ENCODE measurements at regions of chr10 and their contacts with region 1.

Region 1: GRCh38 chr10:101840741-101841453 is 2.7 kb downstream of the KCNIP2 start:
- DNase-seq: peak; percentile 85
- H3K4me3 ChIP-seq: peak overlapping the region; percentile 17 to 45 (median 26)
- H3K27ac ChIP-seq: no peak overlapping the region
- H3K4me1 ChIP-seq: peaks cover 13% of the 10 kb centered on the region
- H3K27me3 ChIP-seq: no peaks in the 10 kb centered on the region
- CTCF ChIP-seq: peak; percentile 98 to 99
- POLR2A ChIP-seq: no peak

Region 2: GRCh38 chr10:101807158-101807557 is 33.7 kb before region 1 on chr10:
- CTCF ChIA-PET with region 1: no interaction called
- POLR2A ChIA-PET with region 1: no interaction called
- dilution Hi-C with region 1: no loop called
- intact Hi-C with region 1: no loop called
- DNase-seq: no peak
- H3K4me3 ChIP-seq: no peak overlapping the region
- H3K27ac ChIP-seq: no peak overlapping the region
- H3K4me1 ChIP-seq: no peaks in the 10 kb centered on the region
- H3K27me3 ChIP-seq: no peaks in the 10 kb centered on the region
- CTCF ChIP-seq: no peak
- POLR2A ChIP-seq: no peak

Region 3: DNA sequence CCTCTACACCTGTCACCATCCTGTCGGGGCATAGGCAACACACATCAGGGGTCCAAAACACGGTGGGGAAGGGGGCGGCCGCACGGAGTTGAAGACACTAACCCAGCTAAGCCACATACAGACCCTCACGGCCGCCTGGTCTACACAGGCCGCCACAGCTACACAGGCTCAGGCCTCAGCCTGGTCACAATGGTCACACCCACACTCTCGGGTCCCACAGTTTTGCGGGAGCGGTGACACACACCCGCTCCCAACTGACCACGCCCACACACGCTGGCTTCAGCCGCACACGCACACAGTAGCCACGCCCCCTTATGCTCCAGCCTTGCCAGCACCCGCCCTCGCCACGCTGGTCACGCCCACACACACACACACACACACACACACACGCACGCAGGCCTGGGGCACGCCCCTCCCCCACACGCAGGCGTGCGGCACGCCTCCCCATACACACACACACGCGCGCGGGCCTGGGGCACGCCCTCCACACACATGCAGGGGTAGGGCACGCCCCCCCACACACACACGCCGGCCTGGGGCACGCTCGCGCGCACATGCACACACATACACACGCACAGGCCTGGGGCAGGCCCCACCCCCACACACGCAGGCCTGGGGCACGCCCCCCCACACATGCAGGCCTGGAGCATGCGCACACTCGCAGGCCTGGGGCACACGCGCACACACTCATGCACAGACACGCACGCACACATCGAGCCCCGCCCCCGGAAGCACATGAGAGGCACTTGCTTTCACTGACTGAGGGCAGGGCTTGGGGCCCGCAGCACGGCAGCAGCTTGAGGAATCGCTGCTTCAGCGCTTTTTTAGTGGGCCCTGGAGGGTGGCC is 10.4 kb before region 1 on chr10:
- CTCF ChIA-PET with region 1: interaction called, 19 read pairs
- POLR2A ChIA-PET with region 1: no interaction called
- dilution Hi-C with region 1: no loop called
- intact Hi-C with region 1: loop called (anchors 1 kb)
- DNase-seq: peak; percentile 91
- H3K4me3 ChIP-seq: peak overlapping the region in 2 of 3 experiments; percentile 25 to 64
- H3K27ac ChIP-seq: no peak overlapping the region
- H3K4me1 ChIP-seq: peaks cover 11% of the 10 kb centered on the region
- H3K27me3 ChIP-seq: no peaks in the 10 kb centered on the region
- CTCF ChIP-seq: no peak
- POLR2A ChIP-seq: no peak

Region 4: GRCh38 chr10:101901340-101901739 is 60.4 kb after region 1 on chr10:
- CTCF ChIA-PET with region 1: interaction called, 19 read pairs
- POLR2A ChIA-PET with region 1: no interaction called
- dilution Hi-C with region 1: no loop called
- intact Hi-C with region 1: no loop called
- DNase-seq: no peak
- H3K4me3 ChIP-seq: no peak overlapping the region
- H3K27ac ChIP-seq: no peak overlapping the region
- H3K4me1 ChIP-seq: no peaks in the 10 kb centered on the region
- H3K27me3 ChIP-seq: no peaks in the 10 kb centered on the region
- CTCF ChIP-seq: no peak
- POLR2A ChIP-seq: no peak

Region 5: DNA sequence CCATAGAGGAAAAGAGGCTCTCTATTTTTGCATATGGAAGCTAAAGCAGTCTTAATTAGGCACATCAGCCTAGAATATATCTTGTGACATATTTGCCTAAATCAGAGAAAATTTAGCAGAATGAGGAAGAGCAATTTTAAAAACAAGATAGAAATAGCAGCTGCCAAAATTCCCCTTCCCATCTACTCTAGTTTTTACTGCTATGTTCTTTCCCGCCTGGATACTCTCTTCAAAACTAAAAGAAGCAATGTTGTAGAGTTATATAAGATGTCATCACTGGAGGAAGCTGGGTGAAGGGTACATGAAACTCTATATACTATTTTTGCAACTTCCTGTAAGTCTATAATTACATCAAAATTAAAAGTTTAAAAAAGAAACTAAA is 128.0 kb after region 1 on chr10:
- CTCF ChIA-PET with region 1: interaction called, 15 read pairs
- POLR2A ChIA-PET with region 1: no interaction called
- dilution Hi-C with region 1: no loop called
- intact Hi-C with region 1: no loop called
- DNase-seq: no peak
- H3K4me3 ChIP-seq: no peak overlapping the region
- H3K27ac ChIP-seq: no peak overlapping the region
- H3K4me1 ChIP-seq: peaks cover 8% of the 10 kb centered on the region
- H3K27me3 ChIP-seq: no peaks in the 10 kb centered on the region
- CTCF ChIP-seq: no peak
- POLR2A ChIP-seq: no peak

Region 6: DNA sequence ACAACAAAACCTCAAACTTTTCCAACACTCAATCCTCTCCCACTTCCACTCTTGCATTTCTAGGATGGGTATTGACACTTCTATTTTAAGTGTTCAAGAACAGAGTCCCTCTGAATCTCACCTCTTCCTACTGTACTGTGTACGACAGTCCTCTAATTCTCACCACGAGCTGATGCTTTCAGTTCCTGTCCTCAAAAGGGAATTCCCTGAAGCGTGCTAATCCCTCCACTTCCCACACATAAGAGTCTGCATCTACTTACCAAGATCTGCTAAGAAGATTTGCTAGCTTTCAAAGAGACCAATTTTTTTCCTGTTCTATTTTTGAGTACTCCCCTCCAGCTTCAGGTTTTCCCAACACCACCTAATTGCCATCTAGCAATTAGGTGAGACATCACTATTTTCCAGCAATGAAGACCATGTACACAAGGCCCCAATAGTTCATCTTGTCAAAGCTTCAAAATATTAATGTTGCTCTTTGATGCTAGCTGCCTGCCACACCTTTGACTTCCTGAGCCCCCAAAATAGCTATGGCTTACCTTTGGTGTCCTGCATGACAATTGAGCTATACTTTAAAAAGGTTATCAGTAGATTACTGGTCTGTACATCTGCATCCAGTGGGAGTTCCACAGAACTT is 160.7 kb after region 1 on chr10:
- CTCF ChIA-PET with region 1: interaction called, 742 read pairs
- POLR2A ChIA-PET with region 1: no interaction called
- dilution Hi-C with region 1: no loop called
- intact Hi-C with region 1: no loop called
- DNase-seq: no peak
- H3K4me3 ChIP-seq: no peak overlapping the region
- H3K27ac ChIP-seq: no peak overlapping the region
- H3K4me1 ChIP-seq: no peaks in the 10 kb centered on the region
- H3K27me3 ChIP-seq: no peaks in the 10 kb centered on the region
- CTCF ChIP-seq: no peak
- POLR2A ChIP-seq: no peak

Region 7: GRCh38 chr10:102064868-102065560 is 224.1 kb after region 1 on chr10 and contains the start of gene HPS6:
- CTCF ChIA-PET with region 1: interaction called, 45 read pairs
- POLR2A ChIA-PET with region 1: no interaction called
- dilution Hi-C with region 1: no loop called
- intact Hi-C with region 1: loop called (anchors 2 kb)
- DNase-seq: peak; percentile 90
- H3K4me3 ChIP-seq: peak within 1 kb of the TSS; percentile 42 to 89 (median 62)
- H3K27ac ChIP-seq: peak within 1 kb of the TSS; percentile 43
- H3K4me1 ChIP-seq: peaks cover 14% of the 10 kb centered on the region
- H3K27me3 ChIP-seq: no peaks in the 10 kb centered on the region
- CTCF ChIP-seq: peak in 1 of 2 donors; percentile 20
- POLR2A ChIP-seq: peak; percentile 94
- total RNA-seq, gene HPS6: 18.5 TPM in 2 replicates